Panc1 (cell line): ENCODE measurements at regions of chr1 and their contacts with region 1.

Region 1: DNA sequence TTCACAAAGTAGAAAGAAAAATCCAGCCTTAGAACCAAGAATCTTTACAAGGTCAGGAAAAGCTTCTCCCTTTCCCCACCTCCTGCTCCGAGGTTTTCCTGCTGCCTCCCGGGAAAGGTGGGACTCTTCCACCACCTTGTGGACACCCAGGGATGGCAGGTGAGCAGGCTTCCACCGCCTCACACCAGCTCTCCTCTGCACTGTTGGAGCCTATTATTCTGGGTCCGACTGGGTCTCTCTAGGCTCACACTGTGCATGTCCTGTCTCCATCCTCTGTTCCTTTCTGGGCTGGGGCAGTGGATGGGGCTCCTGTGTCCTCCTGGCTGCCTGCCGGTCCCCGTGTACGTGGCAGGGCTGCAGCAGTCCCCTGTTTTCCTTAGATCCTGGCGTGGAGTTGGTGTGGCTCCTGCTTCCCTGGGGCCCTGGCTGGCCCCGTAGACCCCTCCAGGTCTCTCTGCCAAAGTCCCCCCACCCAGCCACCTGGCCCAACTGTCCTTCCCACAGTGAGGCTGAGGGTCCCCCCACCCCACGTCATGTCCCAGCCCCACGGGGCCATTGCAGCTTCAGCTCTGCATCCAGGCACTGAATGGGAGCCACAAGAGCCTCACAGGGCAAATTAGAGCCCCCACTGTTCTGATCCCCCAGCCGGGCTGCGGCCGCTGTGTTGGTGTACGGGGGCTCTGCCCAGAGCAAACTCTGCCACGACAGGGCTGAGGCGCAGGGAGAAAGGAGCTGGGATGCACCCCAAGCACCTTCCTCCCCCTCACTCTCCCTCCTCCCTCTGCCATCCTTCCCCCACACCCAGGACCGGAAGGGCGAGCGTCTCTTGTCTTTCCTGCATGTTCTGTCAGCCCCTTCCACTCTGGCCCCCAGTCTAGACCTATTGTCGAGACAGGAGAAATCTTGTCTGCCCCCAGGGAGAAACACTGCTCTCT is 3.3 kb upstream of the SLC45A1 start:
- DNase-seq: peak; percentile 79
- ATAC-seq: peak; percentile 85
- H3K4me3 ChIP-seq: no peak overlapping the region
- H3K27ac ChIP-seq: peak overlapping the region; percentile 98
- H3K4me1 ChIP-seq: peaks cover 60% of the 10 kb centered on the region
- H3K27me3 ChIP-seq: no peaks in the 10 kb centered on the region
- CTCF ChIP-seq: peak; percentile 91

Region 2: DNA sequence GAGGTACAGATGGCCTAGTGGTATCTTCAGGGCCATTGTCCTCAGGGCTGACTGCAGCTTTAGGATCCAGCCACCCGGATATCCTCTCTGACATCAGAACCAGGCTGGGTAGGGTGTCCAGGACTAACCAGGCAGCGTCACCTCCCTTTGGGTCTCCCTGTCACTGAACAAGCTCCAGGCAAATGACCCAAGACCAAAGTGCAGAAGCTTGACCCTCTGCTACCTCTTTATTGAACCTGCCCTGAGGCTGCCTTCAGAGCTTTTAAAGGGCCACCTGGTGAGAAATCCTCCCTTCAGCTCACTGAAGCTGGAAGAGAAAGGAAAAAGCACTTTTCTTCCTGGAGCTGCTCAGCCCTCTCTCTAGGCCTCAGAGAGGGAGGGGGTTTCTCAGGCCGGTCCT is 622.6 kb before region 1 on chr1:
- CTCF ChIA-PET with region 1: no interaction called
- POLR2A ChIA-PET with region 1: no interaction called
- in situ Hi-C with region 1: no loop called
- intact Hi-C with region 1: no loop called
- DNase-seq: no peak
- ATAC-seq: no peak
- H3K4me3 ChIP-seq: no peak overlapping the region
- H3K27ac ChIP-seq: no peak overlapping the region
- H3K4me1 ChIP-seq: no peaks in the 10 kb centered on the region
- H3K27me3 ChIP-seq: no peaks in the 10 kb centered on the region
- CTCF ChIP-seq: no peak

Region 3: GRCh38 chr1:7975212-7975865 is 339.3 kb before region 1 on chr1:
- CTCF ChIA-PET with region 1: interaction called, 13 read pairs
- POLR2A ChIA-PET with region 1: no interaction called
- in situ Hi-C with region 1: no loop called
- intact Hi-C with region 1: loop called (anchors 2 kb)
- DNase-seq: peak; percentile 86
- ATAC-seq: peak; percentile 99
- H3K4me3 ChIP-seq: no peak overlapping the region
- H3K27ac ChIP-seq: peak overlapping the region; percentile 80
- H3K4me1 ChIP-seq: peaks cover 4% of the 10 kb centered on the region
- H3K27me3 ChIP-seq: no peaks in the 10 kb centered on the region
- CTCF ChIP-seq: peak; percentile 98

Region 4: GRCh38 chr1:8026153-8026975 is 288.2 kb before region 1 on chr1 and contains the start of gene ERRFI1:
- CTCF ChIA-PET with region 1: interaction called, 6 read pairs
- POLR2A ChIA-PET with region 1: interaction called, 3 read pairs
- in situ Hi-C with region 1: no loop called
- intact Hi-C with region 1: loop called (anchors 5 kb)
- DNase-seq: no peak
- ATAC-seq: peak; percentile 79
- H3K4me3 ChIP-seq: peak within 1 kb of the TSS; percentile 94 to 99
- H3K27ac ChIP-seq: peak within 1 kb of the TSS; percentile 99
- H3K4me1 ChIP-seq: peaks cover 27% of the 10 kb centered on the region
- H3K27me3 ChIP-seq: no peaks in the 10 kb centered on the region
- CTCF ChIP-seq: no peak
- total RNA-seq, gene ERRFI1: 299 TPM

Region 5: GRCh38 chr1:8137481-8138244 is 176.9 kb before region 1 on chr1:
- CTCF ChIA-PET with region 1: interaction called, 4 read pairs
- POLR2A ChIA-PET with region 1: no interaction called
- in situ Hi-C with region 1: no loop called
- intact Hi-C with region 1: loop called (anchors 5 kb)
- DNase-seq: peak; percentile 85
- ATAC-seq: peak; percentile 69
- H3K4me3 ChIP-seq: peak overlapping the region; percentile 1 to 30; a peak in 3 of 4 replicates
- H3K27ac ChIP-seq: peak overlapping the region; percentile 98
- H3K4me1 ChIP-seq: peaks cover 55% of the 10 kb centered on the region
- H3K27me3 ChIP-seq: no peaks in the 10 kb centered on the region
- CTCF ChIP-seq: no peak

Region 6: DNA sequence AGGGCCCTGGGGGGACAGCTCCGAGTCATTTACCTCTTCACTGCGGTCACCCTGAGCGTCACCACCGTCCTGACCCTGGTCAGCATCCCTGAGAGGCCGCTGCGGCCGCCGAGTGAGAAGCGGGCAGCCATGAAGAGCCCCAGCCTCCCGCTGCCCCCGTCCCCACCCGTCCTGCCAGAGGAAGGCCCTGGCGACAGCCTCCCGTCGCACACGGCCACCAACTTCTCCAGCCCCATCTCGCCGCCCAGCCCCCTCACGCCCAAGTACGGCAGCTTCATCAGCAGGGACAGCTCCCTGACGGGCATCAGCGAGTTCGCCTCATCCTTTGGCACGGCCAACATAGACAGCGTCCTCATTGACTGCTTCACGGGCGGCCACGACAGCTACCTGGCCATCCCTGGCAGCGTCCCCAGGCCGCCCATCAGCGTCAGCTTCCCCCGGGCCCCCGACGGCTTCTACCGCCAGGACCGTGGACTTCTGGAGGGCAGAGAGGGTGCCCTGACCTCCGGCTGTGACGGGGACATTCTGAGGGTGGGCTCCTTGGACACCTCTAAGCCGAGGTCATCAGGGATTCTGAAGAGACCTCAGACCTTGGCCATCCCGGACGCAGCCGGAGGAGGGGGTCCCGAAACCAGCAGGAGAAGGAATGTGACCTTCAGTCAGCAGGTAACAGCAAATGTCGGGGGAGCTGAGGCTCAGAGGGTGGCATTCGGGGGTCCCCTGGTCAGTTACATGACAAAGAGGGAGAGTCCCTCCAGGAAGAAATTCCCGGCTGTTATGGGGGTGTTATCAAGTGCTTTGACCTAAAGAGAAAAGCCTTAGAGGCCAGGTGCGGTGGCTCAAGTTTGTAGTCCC is 15.9 kb after region 1 on chr1:
- CTCF ChIA-PET with region 1: interaction called, 11 read pairs
- POLR2A ChIA-PET with region 1: no interaction called
- in situ Hi-C with region 1: no loop called
- intact Hi-C with region 1: no loop called
- DNase-seq: no peak
- ATAC-seq: no peak
- H3K4me3 ChIP-seq: no peak overlapping the region
- H3K27ac ChIP-seq: no peak overlapping the region
- H3K4me1 ChIP-seq: no peaks in the 10 kb centered on the region
- H3K27me3 ChIP-seq: no peaks in the 10 kb centered on the region
- CTCF ChIP-seq: no peak

Region 7: DNA sequence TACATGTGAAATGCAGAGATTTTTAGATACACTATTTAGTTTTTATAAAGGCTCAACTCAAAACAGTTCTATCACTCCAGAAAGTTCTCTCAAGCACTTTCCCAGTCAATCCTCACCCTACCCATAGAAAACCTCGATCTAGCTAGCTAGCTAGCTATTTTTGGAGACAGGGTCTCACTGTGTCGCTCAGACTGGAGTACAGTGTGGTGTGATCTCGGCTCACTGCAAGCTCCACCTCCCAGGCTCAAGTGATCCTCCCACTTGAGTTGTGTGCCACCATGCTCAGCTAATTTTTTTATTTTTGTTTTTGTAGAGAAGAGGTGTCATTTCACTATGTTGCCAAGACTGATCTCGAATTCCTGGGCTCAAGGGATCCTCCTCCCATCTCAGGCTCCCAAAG is 266.0 kb after region 1 on chr1:
- CTCF ChIA-PET with region 1: no interaction called
- POLR2A ChIA-PET with region 1: no interaction called
- in situ Hi-C with region 1: no loop called
- intact Hi-C with region 1: no loop called
- DNase-seq: no peak
- ATAC-seq: no peak
- H3K4me3 ChIP-seq: no peak overlapping the region
- H3K27ac ChIP-seq: no peak overlapping the region
- H3K4me1 ChIP-seq: no peaks in the 10 kb centered on the region; the same call in 1 of the 2 replicates
- H3K27me3 ChIP-seq: no peaks in the 10 kb centered on the region
- CTCF ChIP-seq: no peak